Ascending aorta (tissue), 2 donors: ENCODE measurements at regions of chr3 and their contacts with region 1.

Region 1: GRCh38 chr3:98817547-98818041 is 54.5 kb downstream of the ST3GAL6 start:
- DNase-seq: no peak
- H3K4me3 ChIP-seq: no peak overlapping the region
- H3K27ac ChIP-seq: no peak overlapping the region
- H3K4me1 ChIP-seq: no peaks in the 10 kb centered on the region
- H3K27me3 ChIP-seq: no peaks in the 10 kb centered on the region
- CTCF ChIP-seq: peak; percentile 65 to 74 (median 70)

Region 2: DNA sequence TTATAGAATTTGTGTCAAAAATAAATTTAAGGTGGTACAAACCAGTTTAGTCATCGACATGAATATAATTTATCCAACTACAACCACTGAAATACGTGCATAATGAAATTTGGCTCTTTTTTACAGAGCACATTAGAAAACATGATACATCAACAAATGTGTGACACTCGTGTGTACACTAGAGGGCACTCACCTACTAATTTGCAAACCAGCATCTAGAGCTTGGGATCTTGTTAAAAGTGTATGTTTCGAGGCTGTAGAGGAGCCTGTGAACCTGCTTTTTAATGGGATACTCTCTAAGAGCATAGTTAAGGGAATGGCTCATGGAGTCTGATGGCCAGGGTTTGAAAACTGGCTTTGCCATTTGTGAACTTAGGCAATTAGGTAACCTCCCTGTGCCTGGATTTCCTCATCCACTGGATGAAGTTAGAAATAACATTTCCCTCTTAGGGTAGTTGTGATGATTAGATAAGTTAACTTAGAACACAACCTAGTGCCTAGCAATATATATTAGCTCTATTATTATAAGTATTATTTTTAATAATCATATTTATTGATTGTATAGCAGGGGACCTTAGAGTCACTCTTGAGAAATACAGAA is 215.4 kb before region 1 on chr3:
- intact Hi-C with region 1: loop called (anchors 2 kb)
- DNase-seq: no peak
- H3K4me3 ChIP-seq: no peak overlapping the region
- H3K27ac ChIP-seq: no peak overlapping the region
- H3K4me1 ChIP-seq: no peaks in the 10 kb centered on the region
- H3K27me3 ChIP-seq: no peaks in the 10 kb centered on the region
- CTCF ChIP-seq: peak; percentile 58 to 78 (median 67)

Region 3: DNA sequence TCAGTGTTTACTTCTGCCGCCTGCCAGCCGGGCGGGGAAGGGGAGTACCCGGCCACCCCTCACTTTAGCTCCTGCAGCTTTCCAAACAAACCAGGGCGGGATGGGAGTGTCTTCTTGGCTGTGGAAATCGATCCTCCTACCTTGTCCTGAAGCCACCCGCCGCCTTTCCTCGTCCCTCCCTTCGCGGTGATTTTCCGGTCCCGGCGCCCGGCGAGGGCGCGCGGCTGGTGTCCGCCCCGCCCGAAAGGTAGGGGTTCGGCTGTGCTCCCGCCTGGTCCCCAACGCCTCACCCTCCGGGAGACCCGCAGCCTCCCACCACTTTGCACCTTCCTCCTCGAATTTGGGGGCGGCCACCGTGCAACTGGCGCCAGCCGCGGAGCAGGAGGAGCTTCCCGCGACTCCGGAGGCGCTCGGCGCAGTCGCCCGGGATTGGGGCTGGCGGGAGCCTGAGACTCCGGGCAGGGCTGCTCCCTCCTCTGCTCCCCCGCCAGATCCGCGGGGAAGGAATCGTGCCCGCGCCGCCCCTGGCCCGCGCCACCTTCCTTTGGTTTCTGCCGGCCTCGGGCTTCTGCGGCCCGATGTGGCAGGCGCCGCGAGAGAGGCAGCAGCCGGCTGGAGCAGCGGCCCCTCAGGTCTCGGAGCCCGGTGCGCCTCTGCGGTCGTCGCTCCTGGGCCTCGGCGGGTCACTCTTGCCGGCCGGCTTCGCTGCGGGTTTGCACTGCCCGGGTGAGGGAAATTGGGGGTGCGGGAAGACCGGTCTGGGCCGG is 85.1 kb before region 1 on chr3:
- intact Hi-C with region 1: loop called (anchors 5 kb)
- DNase-seq: peak in 1 of 2 donors; percentile 67
- H3K4me3 ChIP-seq: peak overlapping the region; percentile 74 to 89
- H3K27ac ChIP-seq: peak overlapping the region; percentile 86 to 94
- H3K4me1 ChIP-seq: no peaks in the 10 kb centered on the region
- H3K27me3 ChIP-seq: no peaks in the 10 kb centered on the region
- CTCF ChIP-seq: peak in 1 of 3 experiments; percentile 2

Region 4: DNA sequence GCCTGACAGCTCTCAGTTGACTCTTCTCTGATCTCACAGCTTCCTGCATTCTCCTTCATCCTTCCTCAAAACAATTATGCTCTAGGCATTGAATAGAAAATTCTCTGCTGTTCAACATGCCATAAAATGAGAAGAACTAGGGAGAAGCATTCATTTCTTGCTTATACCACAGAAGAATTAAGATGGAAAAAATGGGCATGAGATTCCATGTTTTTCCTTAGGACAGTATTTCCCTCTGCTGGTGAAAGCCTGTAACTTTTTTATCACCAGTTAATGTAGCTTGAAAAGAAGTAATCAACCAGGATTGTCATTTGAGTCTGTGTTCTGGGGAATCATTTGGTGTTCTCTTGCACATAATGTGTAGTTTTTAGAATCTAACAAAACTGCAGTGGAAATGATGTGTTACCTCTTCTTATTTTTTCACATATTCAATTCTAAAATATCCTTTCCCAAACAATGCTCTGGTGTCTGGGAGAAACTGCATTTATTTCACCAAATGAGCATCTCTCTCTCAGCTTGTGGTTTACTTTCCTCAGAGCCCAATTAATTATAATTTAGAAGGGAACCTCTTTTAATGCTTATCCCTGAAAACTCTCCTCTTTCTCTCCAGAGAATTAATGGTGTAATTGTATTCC is 176.7 kb after region 1 on chr3:
- intact Hi-C with region 1: loop called (anchors 1 kb)
- DNase-seq: no peak
- H3K4me3 ChIP-seq: no peak overlapping the region
- H3K27ac ChIP-seq: no peak overlapping the region
- H3K4me1 ChIP-seq: no peaks in the 10 kb centered on the region
- H3K27me3 ChIP-seq: no peaks in the 10 kb centered on the region
- CTCF ChIP-seq: peak; percentile 53 to 75 (median 71)

Region 5: GRCh38 chr3:99789011-99789721 is 971.6 kb after region 1 on chr3:
- intact Hi-C with region 1: loop called (anchors 5 kb)
- DNase-seq: peak in 1 of 2 donors; percentile 68
- H3K4me3 ChIP-seq: no peak overlapping the region
- H3K27ac ChIP-seq: peak overlapping the region in 1 of 2 donors; percentile 41
- H3K4me1 ChIP-seq: no peaks in the 10 kb centered on the region
- H3K27me3 ChIP-seq: no peaks in the 10 kb centered on the region
- CTCF ChIP-seq: peak; percentile 46 to 71 (median 55)